Activated T-helper 1 cell treated with anti-CD3 and anti-CD28 coated beads, Interleukin-12 subunit alpha, Interleukin-12 subunit beta, Interleukin-2, Interleukin-4 antibody, amounts not matched to agents 30 ng/mL and 10 ng/mL and 1 ng/mL, durations not matched to agents 14 hours and 24 hours and 36 hours (primary cell): ENCODE measurements at regions of chr2 and their contacts with region 1.

Region 1: GRCh38 chr2:95115418-95115817 is 6.2 kb downstream of the MRPS5 start:
- DNase-seq: peak; percentile 69
- H3K4me3 Mint-ChIP-seq: no peak overlapping the region
- H3K27ac Mint-ChIP-seq: no peak overlapping the region
- H3K4me1 Mint-ChIP-seq: peaks cover 47% of the 10 kb centered on the region
- H3K27me3 Mint-ChIP-seq: no peaks in the 10 kb centered on the region

Region 2: GRCh38 chr2:94874277-94875008 is 241.0 kb before region 1 on chr2:
- intact Hi-C with region 1: loop called (anchors 1 kb)
- DNase-seq: peak; percentile 56
- H3K4me3 Mint-ChIP-seq: no peak overlapping the region
- H3K27ac Mint-ChIP-seq: no peak overlapping the region
- H3K4me1 Mint-ChIP-seq: no peaks in the 10 kb centered on the region
- H3K27me3 Mint-ChIP-seq: no peaks in the 10 kb centered on the region

Region 3: GRCh38 chr2:94956797-94957391 is 158.5 kb before region 1 on chr2:
- intact Hi-C with region 1: loop called (anchors 1 kb)
- DNase-seq: no peak
- H3K4me3 Mint-ChIP-seq: no peak overlapping the region
- H3K27ac Mint-ChIP-seq: no peak overlapping the region
- H3K4me1 Mint-ChIP-seq: no peaks in the 10 kb centered on the region
- H3K27me3 Mint-ChIP-seq: peaks cover 15% of the 10 kb centered on the region

Region 4: GRCh38 chr2:94986392-94986963 is 128.9 kb before region 1 on chr2:
- intact Hi-C with region 1: loop called (anchors 1 kb)
- DNase-seq: peak; percentile 9
- H3K4me3 Mint-ChIP-seq: no peak overlapping the region
- H3K27ac Mint-ChIP-seq: no peak overlapping the region
- H3K4me1 Mint-ChIP-seq: no peaks in the 10 kb centered on the region
- H3K27me3 Mint-ChIP-seq: peaks cover 10% of the 10 kb centered on the region